CD4-positive, alpha-beta T cell (primary cell): ENCODE measurements at regions of chr19 and their contacts with region 1.

Region 1: GRCh38 chr19:18000935-18001778 is 6.8 kb upstream of the ARRDC2 start:
- DNase-seq: peak; percentile 80 to 99 (median 94)
- ATAC-seq: peak; percentile 80
- H3K4me3 ChIP-seq: peak overlapping the region; percentile 92
- H3K4me3 Mint-ChIP-seq: peak overlapping the region; percentile 93
- H3K27ac ChIP-seq: peak overlapping the region; percentile 91 to 95
- H3K27ac Mint-ChIP-seq: peak overlapping the region; percentile 98
- H3K4me1 ChIP-seq: peaks cover 49% of the 10 kb centered on the region
- H3K4me1 Mint-ChIP-seq: peaks cover 28% of the 10 kb centered on the region
- H3K27me3 ChIP-seq: no peaks in the 10 kb centered on the region
- H3K27me3 Mint-ChIP-seq: peaks cover 4% of the 10 kb centered on the region
- CTCF ChIP-seq: no peak

Region 2: GRCh38 chr19:17932485-17933338 is 68.4 kb before region 1 on chr19 and contains the start of gene CCDC124:
- CTCF ChIA-PET with region 1: interaction called, 89 read pairs
- POLR2A ChIA-PET with region 1: interaction called, 25 read pairs
- intact Hi-C with region 1: no loop called
- DNase-seq: peak; percentile 84 to 97 (median 92)
- ATAC-seq: peak; percentile 95
- H3K4me3 ChIP-seq: peak within 1 kb of the TSS; percentile 76
- H3K4me3 Mint-ChIP-seq: peak within 1 kb of the TSS; percentile 94
- H3K27ac ChIP-seq: peak within 1 kb of the TSS; percentile 81 to 93
- H3K27ac Mint-ChIP-seq: peak within 1 kb of the TSS; percentile 96
- H3K4me1 ChIP-seq: peaks cover 22% of the 10 kb centered on the region
- H3K4me1 Mint-ChIP-seq: peaks cover 19% of the 10 kb centered on the region
- H3K27me3 ChIP-seq: no peaks in the 10 kb centered on the region
- H3K27me3 Mint-ChIP-seq: no peaks in the 10 kb centered on the region
- CTCF ChIP-seq: peak; percentile 83
- total RNA-seq, gene CCDC124: 26.9 to 28.1 TPM

Region 3: DNA sequence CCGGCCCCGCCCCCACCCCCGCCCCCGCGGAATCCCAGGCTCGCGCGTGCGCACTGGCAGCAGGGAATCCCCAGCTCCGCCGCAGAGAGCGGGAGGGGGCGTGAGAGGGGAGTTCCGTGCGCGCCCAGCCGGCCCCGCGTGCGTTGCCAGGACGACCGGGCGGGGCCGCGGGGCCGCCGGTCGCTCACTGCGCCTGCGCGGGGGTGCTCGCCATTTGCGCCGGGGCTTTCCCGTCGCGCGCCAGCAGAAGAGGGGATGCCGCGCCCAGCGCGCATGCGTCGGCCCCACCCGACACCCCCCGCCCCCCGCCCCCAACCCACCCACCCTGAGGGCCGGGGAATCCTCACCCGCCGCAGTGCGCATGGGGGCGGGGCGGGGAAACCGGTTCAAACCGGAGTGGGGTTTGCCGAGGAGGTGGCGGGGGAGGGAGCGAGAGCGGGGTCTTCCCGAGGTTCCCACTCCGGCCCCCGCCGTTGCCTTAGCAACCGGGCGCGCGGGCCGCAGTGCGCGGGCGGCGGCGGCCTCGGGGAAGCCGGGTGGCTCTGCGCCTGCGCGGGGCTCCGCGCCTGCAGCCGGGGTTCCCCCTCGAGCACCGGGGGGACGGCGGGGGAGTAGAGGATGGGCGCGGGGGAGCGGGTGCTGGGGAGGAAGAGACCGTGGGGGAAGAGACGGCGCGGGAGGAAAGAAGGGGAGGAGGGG is 53.2 kb before region 1 on chr19:
- CTCF ChIA-PET with region 1: interaction called, 24 read pairs
- POLR2A ChIA-PET with region 1: interaction called, 10 read pairs
- intact Hi-C with region 1: loop called (anchors 2 kb)
- DNase-seq: peak; percentile 89 to 99 (median 94)
- ATAC-seq: peak; percentile 69
- H3K4me3 ChIP-seq: peak overlapping the region; percentile 57
- H3K4me3 Mint-ChIP-seq: peak overlapping the region; percentile 89
- H3K27ac ChIP-seq: no peak overlapping the region
- H3K27ac Mint-ChIP-seq: peak overlapping the region; percentile 93
- H3K4me1 ChIP-seq: peaks cover 58% of the 10 kb centered on the region
- H3K4me1 Mint-ChIP-seq: peaks cover 55% of the 10 kb centered on the region
- H3K27me3 ChIP-seq: peaks cover 36 to 46% of the 10 kb centered on the region in 2 experiments
- H3K27me3 Mint-ChIP-seq: peaks cover 44% of the 10 kb centered on the region
- CTCF ChIP-seq: no peak

Region 4: DNA sequence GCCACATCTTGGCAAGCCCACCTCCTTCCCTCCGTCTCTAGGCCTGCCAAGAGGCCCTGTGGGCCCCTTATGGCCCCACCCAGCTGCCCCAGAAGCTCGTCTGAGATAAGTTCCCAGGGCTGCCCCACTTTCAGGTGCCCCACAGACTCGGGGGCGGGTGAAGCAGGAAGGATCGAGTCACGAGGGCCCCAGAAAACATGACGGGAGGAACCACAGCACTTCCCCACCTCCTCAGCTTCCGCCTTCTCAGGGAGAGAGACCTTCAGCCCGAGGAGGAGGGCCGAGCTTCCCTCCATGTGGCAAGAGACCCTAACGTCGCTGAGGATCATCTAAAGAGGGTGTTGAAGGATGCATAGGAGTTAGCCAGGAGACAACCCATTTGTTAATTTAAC is 90.1 kb after region 1 on chr19:
- CTCF ChIA-PET with region 1: interaction called, 4 read pairs
- POLR2A ChIA-PET with region 1: interaction called, 19 read pairs
- intact Hi-C with region 1: no loop called
- DNase-seq: peak; percentile 55 to 94 (median 74)
- ATAC-seq: peak; percentile 69
- H3K4me3 ChIP-seq: no peak overlapping the region
- H3K4me3 Mint-ChIP-seq: peak overlapping the region; percentile 82
- H3K27ac ChIP-seq: peak overlapping the region; percentile 74 to 93
- H3K27ac Mint-ChIP-seq: peak overlapping the region; percentile 98
- H3K4me1 ChIP-seq: peaks cover 67% of the 10 kb centered on the region
- H3K4me1 Mint-ChIP-seq: peaks cover 58% of the 10 kb centered on the region
- H3K27me3 ChIP-seq: no peaks in the 10 kb centered on the region
- H3K27me3 Mint-ChIP-seq: no peaks in the 10 kb centered on the region
- CTCF ChIP-seq: no peak

Region 5: GRCh38 chr19:18117692-18118378 is 116.7 kb after region 1 on chr19:
- CTCF ChIA-PET with region 1: no interaction called
- POLR2A ChIA-PET with region 1: interaction called, 8 read pairs
- intact Hi-C with region 1: loop called in 1 of 2 experiments (anchors 5 kb)
- DNase-seq: peak; percentile 88 to 99 (median 96)
- ATAC-seq: peak; percentile 72
- H3K4me3 ChIP-seq: peak overlapping the region; percentile 86
- H3K4me3 Mint-ChIP-seq: peak overlapping the region; percentile 90
- H3K27ac ChIP-seq: peak overlapping the region; percentile 77 to 80
- H3K27ac Mint-ChIP-seq: peak overlapping the region; percentile 97
- H3K4me1 ChIP-seq: peaks cover 58% of the 10 kb centered on the region
- H3K4me1 Mint-ChIP-seq: peaks cover 37% of the 10 kb centered on the region
- H3K27me3 ChIP-seq: no peaks in the 10 kb centered on the region
- H3K27me3 Mint-ChIP-seq: no peaks in the 10 kb centered on the region
- CTCF ChIP-seq: no peak